Activated naive CD4-positive, alpha-beta T cell treated with anti-CD3 and anti-CD28 coated beads, Interleukin-2, amount 10 ng/mL, durations not matched to agents 7 days and 5 days (primary cell): ENCODE measurements at regions of chr2 and their contacts with region 1.

Region 1: GRCh38 chr2:94986392-94986963 is 39.0 kb upstream of the MAL start:
- DNase-seq: peak; percentile 70
- H3K4me3 Mint-ChIP-seq: no peak overlapping the region
- H3K27ac Mint-ChIP-seq: no peak overlapping the region
- H3K4me1 Mint-ChIP-seq: peaks cover 3% of the 10 kb centered on the region
- H3K27me3 Mint-ChIP-seq: peaks cover 29% of the 10 kb centered on the region

Region 2: DNA sequence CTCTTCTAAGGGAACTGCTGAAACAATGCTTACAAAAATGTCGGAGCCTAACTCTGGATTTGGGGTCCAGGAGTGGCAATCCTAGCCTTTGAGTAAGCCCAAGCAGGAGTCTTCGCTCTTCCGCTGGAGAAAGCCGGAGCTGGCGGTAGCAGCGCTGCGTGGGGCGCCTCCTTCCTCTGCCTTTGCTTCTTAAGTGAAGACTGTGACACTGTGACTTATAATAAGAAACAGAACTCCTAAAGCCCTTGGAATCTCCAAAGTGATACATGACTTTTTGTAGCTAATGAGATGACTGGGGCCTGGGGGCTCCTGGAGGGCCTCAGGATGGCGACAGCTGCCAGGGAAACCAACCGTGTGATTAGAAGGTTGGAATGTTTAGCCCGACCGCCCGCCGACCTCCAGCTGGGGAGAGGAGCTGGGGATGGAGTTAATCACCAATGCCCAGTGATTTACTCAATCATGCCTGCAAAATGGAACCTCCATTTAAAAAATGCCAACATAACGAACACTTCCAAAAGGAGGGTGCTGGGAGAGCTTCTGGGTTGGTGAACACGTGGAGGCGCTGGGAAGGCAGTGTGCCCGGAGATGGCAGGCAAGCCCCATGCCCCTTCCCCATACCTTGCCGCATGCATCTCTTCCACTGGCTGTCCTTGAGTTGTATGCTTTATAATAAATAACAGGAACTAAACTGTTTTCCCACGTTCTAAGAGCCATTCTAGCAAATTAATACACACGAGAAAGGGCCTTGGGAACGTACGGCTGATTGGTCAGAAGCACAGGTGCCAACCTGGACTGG is 10.0 kb after region 1 on chr2:
- CTCF ChIA-PET with region 1: interaction called, 11 read pairs
- DNase-seq: no peak
- H3K4me3 Mint-ChIP-seq: no peak overlapping the region
- H3K27ac Mint-ChIP-seq: no peak overlapping the region
- H3K4me1 Mint-ChIP-seq: peaks cover 2% of the 10 kb centered on the region
- H3K27me3 Mint-ChIP-seq: peaks cover 76% of the 10 kb centered on the region

Region 3: GRCh38 chr2:95012881-95013550 is 26.5 kb after region 1 on chr2:
- CTCF ChIA-PET with region 1: interaction called, 10 read pairs
- DNase-seq: no peak
- H3K4me3 Mint-ChIP-seq: no peak overlapping the region
- H3K27ac Mint-ChIP-seq: no peak overlapping the region
- H3K4me1 Mint-ChIP-seq: peaks cover 7% of the 10 kb centered on the region
- H3K27me3 Mint-ChIP-seq: peaks cover 7% of the 10 kb centered on the region

Region 4: DNA sequence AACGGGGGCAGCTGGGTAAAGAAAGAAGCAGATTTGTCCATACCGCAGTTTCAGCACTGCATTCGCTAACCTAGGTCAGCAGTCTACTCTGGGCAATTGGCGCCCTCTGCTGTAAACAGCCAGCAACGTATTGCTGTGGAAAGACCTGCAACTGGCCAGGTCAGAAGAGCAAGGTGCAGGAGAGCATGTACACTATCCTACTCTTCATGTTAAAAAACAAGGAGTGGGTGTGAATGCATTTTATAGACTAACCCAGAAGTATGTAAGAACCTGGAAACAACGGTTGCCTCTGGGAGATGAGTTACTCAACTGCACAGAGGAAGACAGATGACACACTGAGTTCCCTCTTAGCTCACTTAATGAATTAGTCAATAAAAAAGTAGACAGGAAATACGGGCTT is 128.9 kb after region 1 on chr2:
- CTCF ChIA-PET with region 1: interaction called, 32 read pairs
- DNase-seq: peak; percentile 88
- H3K4me3 Mint-ChIP-seq: no peak overlapping the region
- H3K27ac Mint-ChIP-seq: peak overlapping the region; percentile 47
- H3K4me1 Mint-ChIP-seq: peaks cover 44% of the 10 kb centered on the region
- H3K27me3 Mint-ChIP-seq: no peaks in the 10 kb centered on the region